WTC11 (cell line): ENCODE measurements at regions of chr3 and their contacts with region 1.

Region 1: DNA sequence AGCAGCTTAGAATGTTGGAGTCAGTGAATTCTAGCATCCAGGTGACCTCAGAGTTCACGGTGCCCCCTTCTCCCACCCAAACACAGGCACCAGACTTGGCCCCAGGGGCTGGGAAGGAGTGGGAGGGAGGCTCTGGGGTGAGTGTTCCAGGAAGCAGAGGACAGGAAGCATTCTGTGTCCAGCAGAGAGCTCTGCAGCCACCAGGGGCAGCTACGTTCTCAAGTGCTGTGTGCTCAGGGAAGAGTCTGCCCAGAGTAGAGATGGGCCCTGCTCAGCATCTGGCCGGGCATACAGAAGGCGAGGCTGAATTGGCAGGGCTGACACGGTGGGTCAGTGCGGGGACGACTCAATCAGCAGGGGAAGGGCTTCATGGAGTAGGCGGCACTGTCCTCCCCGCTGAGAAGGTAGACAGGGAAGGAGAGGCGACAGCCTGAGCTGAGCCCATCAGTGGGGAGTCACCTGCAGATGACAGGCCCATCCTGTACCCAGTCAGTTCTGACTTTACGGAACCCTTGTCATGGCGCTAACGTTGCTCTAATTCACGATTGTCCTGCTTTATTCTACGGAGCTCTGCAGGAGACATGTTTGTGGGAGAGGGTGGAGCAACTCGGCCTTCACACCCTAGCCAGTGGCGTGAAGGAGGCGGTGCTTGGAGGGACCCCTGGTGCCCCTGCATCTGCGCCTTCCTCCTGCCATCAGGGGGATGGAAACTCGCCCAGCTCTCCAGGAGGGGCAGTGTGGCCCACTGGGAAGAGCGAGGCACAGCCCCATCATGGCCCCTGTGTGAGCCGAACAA is 82.2 kb downstream of the C3orf70 start:
- DNase-seq: peak; percentile 41
- ATAC-seq: peak; percentile 77
- H3K4me3 Mint-ChIP-seq: no peak overlapping the region
- H3K27ac Mint-ChIP-seq: no peak overlapping the region
- H3K4me1 Mint-ChIP-seq: peaks cover 16% of the 10 kb centered on the region
- H3K27me3 Mint-ChIP-seq: no peaks in the 10 kb centered on the region
- CTCF ChIP-seq: no peak

Region 2: DNA sequence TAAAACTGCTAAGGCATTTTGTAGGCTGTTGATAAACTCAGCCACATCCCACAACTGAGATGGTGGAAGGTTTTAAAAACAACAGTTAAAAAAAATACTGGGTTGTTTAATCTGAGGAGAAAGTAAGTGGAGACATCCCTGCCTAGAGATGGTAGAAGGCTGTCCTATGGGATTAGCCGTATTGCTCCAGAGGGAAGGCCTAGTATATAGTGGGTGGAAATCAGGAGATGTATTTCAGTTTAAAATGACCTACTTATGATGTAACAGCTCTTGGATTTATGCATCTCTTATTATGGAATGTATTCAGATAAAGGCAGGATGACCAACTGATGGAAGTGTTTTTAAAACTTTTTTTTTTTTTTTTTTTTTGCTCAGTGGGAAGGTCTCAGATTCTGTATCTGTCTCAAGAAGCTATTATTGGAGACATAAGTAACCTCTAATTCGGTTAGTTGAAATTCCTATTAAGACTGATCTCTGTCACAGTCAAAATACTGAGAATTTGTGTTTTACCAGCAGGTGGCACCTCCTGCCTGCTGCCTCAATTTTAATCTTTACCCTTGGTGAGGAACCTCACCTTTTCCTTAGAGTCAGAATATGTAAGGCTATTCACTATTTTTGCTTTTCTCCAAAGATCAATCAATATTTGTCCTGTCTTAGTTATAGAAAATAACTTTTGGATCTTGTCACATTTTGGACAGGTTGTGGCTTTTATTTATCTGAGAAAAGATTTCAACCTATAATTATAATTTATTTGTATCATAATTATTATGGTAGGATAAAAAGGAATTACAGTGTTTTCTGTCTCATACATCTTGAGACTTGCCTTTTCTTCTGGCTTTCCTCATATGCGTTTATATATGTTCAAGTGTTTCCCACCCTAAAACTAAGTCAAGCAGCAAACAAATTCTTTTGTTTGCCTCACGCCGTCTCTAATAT is 195.7 kb before region 1 on chr3:
- CTCF ChIA-PET with region 1: interaction called, 14 read pairs
- POLR2A ChIA-PET with region 1: no interaction called
- DNase-seq: peak; percentile 18
- ATAC-seq: peak; percentile 43
- H3K4me3 Mint-ChIP-seq: no peak overlapping the region
- H3K27ac Mint-ChIP-seq: no peak overlapping the region
- H3K4me1 Mint-ChIP-seq: peaks cover 6% of the 10 kb centered on the region; the same call in 1 of the 2 replicates
- H3K27me3 Mint-ChIP-seq: no peaks in the 10 kb centered on the region
- CTCF ChIP-seq: peak; percentile 43; the same call in 1 of the 2 replicates

Region 3: GRCh38 chr3:185084901-185085300 is 14.2 kb after region 1 on chr3:
- CTCF ChIA-PET with region 1: interaction called, 22 read pairs
- POLR2A ChIA-PET with region 1: no interaction called
- DNase-seq: no peak
- ATAC-seq: peak; percentile 34; the same call in 1 of the 2 replicates
- H3K4me3 Mint-ChIP-seq: no peak overlapping the region
- H3K27ac Mint-ChIP-seq: no peak overlapping the region
- H3K4me1 Mint-ChIP-seq: peaks cover 15% of the 10 kb centered on the region
- H3K27me3 Mint-ChIP-seq: no peaks in the 10 kb centered on the region
- CTCF ChIP-seq: no peak

Region 4: DNA sequence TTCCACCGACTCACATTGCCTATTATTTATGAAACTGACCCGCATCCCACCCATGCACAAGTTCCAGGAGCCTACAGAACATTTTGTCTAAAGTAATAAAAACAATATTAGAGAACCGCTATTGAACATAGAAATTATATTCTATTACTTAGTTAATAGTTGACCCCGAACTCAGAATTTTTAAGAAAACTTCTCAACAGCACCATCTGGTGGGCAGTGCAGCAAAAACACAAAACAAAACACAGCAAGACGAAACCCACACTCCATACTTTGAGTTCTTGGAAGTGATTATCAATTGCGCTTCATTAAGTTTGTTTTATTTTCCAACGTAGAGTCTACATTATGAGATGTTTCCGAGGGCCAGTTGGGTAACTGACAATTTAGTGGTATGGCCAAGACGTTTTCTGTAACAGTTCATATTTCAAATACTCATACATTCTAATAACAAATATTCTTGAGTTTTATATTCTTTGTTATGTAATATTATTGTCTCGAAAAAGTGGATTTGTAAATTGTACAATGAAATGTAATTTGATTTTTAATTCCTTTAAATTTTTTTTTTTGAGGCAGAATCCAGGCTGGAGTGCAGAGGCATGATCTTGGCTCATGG is 106.2 kb after region 1 on chr3:
- CTCF ChIA-PET with region 1: interaction called, 48 read pairs
- POLR2A ChIA-PET with region 1: no interaction called
- DNase-seq: peak; percentile 51
- ATAC-seq: no peak
- H3K4me3 Mint-ChIP-seq: no peak overlapping the region
- H3K27ac Mint-ChIP-seq: no peak overlapping the region
- H3K4me1 Mint-ChIP-seq: peaks cover 25% of the 10 kb centered on the region
- H3K27me3 Mint-ChIP-seq: no peaks in the 10 kb centered on the region
- CTCF ChIP-seq: peak; percentile 50; the same call in 1 of the 2 replicates

Region 5: GRCh38 chr3:185308126-185308754 is 237.6 kb after region 1 on chr3:
- CTCF ChIA-PET with region 1: interaction called, 20 read pairs
- POLR2A ChIA-PET with region 1: no interaction called
- DNase-seq: peak; percentile 78
- ATAC-seq: peak; percentile 93
- H3K4me3 Mint-ChIP-seq: no peak overlapping the region
- H3K27ac Mint-ChIP-seq: no peak overlapping the region
- H3K4me1 Mint-ChIP-seq: 0 out of 2 replicates have a peak, but pooled peaks cover 3% of the 10 kb centered on the region
- H3K27me3 Mint-ChIP-seq: peaks cover 4% of the 10 kb centered on the region; the same call in 1 of the 2 replicates
- CTCF ChIP-seq: peak; percentile 53; the same call in 1 of the 2 replicates